Endothelial cell of umbilical vein (primary cell): ENCODE measurements at regions of chr2 and their contacts with region 1.

Region 1: DNA sequence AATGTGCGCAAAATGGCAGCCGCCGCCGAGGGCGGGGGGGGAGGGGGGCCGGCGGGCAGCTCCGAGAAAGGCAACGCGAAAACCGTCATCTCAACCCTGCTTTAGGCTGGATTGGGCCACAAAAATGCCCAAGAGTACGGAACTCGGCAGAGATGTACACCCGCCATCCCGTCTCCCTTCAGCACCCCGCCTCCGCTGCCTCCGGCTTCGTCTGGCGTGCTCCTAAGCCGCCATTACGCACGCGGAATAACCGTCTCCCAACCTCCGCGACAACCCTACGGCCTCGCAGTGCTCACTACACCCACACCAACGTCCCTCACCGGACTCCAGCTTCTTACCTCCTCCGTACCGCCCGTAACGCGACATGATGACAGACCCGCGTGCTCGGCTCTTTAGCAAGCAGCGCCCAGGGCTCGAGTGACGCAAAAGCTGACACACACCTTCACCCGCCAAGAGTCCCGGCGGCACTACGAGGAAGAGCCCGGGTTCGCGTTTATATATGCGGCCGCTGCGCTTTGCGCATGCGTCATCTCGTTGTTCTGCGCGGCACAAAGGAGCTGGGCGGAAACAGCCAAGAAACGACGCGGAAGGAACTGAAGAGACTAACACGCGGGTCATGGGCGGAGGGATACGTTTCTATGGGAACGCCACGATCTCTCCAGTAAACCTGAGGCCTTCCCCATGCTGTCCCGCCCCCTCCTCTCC is at the start of gene SRSF7:
- DNase-seq: peak; percentile 99
- H3K4me3 ChIP-seq: peak within 1 kb of the TSS; percentile 54 to 92 (median 72)
- H3K27ac ChIP-seq: peak within 1 kb of the TSS; percentile 85
- H3K4me1 ChIP-seq: peaks cover 36% of the 10 kb centered on the region
- H3K27me3 ChIP-seq: no peaks in the 10 kb centered on the region
- CTCF ChIP-seq: no peak
- POLR2A ChIP-seq: peak; percentile 100
- total RNA-seq, gene SRSF7: 202 and 204 TPM in 2 replicates

Region 2: DNA sequence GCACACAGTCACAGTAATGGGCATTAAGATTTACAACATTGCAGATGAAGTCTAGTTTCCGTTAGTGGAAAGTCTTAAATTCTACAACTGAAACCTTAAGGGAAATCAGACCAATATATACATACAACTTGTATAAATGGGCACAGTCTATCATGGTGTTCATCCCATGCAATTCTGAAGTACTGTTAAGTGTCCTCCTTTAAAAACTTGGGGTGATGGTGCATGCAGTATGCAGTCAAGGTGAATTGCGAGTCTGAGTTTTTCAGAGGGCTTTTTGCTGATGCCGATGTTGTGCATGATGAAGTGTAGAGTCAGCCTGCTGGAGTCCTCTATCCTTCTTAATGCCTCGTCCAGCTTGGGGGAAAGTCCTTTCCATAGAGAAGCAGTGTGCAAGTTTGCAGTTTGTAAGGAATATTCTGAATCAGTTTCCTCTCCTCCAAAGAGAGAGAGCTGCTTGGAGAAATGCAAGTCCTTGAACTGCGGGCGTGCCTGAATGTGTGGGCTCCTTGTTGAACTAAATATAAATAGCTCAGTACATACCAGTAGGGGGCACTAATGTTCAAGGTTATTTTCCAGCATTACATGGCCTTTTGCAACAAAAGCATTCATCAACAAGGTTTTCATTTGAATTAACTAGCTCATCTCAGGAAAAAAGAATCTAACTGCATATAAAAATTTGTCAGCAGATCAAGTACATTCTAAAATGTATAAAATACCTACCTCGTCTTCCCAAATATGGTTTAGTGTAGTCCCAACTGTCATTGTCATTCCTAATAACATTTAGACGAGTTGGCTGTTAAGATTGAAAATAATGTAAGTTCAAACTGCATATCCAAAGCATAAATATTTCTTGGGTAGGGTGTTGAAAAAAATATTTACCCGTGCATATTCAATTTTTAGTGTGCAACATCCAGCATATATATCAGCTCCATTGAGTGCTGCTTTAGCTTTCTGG is 169.6 kb before region 1 on chr2:
- CTCF ChIA-PET with region 1: interaction called, 4 read pairs
- POLR2A ChIA-PET with region 1: interaction called, 11 read pairs
- dilution Hi-C with region 1: no loop called
- intact Hi-C with region 1: no loop called
- DNase-seq: peak; percentile 74
- H3K4me3 ChIP-seq: no peak overlapping the region
- H3K27ac ChIP-seq: no peak overlapping the region
- H3K4me1 ChIP-seq: no peaks in the 10 kb centered on the region
- H3K27me3 ChIP-seq: no peaks in the 10 kb centered on the region
- CTCF ChIP-seq: peak; percentile 49 to 53
- POLR2A ChIP-seq: no peak

Region 3: GRCh38 chr2:38665854-38666555 is 85.0 kb before region 1 on chr2 and contains the start of gene GALM:
- CTCF ChIA-PET with region 1: no interaction called
- POLR2A ChIA-PET with region 1: interaction called, 12 read pairs
- dilution Hi-C with region 1: no loop called
- intact Hi-C with region 1: no loop called
- DNase-seq: peak; percentile 92
- H3K4me3 ChIP-seq: peak within 1 kb of the TSS; percentile 8 to 46 (median 44)
- H3K27ac ChIP-seq: no peak within 1 kb of the TSS
- H3K4me1 ChIP-seq: peaks cover 3% of the 10 kb centered on the region
- H3K27me3 ChIP-seq: no peaks in the 10 kb centered on the region
- CTCF ChIP-seq: no peak
- POLR2A ChIP-seq: no peak
- total RNA-seq, gene GALM: 5.4 and 6.1 TPM in 2 replicates

Region 4: GRCh38 chr2:38734299-38735058 is 16.6 kb before region 1 on chr2:
- CTCF ChIA-PET with region 1: no interaction called
- POLR2A ChIA-PET with region 1: interaction called, 20 read pairs
- dilution Hi-C with region 1: no loop called
- intact Hi-C with region 1: no loop called
- DNase-seq: no peak
- H3K4me3 ChIP-seq: no peak overlapping the region
- H3K27ac ChIP-seq: no peak overlapping the region
- H3K4me1 ChIP-seq: no peaks in the 10 kb centered on the region
- H3K27me3 ChIP-seq: no peaks in the 10 kb centered on the region
- CTCF ChIP-seq: no peak
- POLR2A ChIP-seq: no peak

Region 5: GRCh38 chr2:38771632-38772031 is 20.6 kb after region 1 on chr2:
- CTCF ChIA-PET with region 1: interaction called, 5 read pairs
- POLR2A ChIA-PET with region 1: interaction called, 29 read pairs
- dilution Hi-C with region 1: no loop called
- intact Hi-C with region 1: no loop called
- DNase-seq: peak; percentile 23
- H3K4me3 ChIP-seq: no peak overlapping the region
- H3K27ac ChIP-seq: no peak overlapping the region
- H3K4me1 ChIP-seq: no peaks in the 10 kb centered on the region
- H3K27me3 ChIP-seq: peaks cover 3 to 4% of the 10 kb centered on the region in 2 experiments
- CTCF ChIP-seq: no peak
- POLR2A ChIP-seq: no peak

Region 6: DNA sequence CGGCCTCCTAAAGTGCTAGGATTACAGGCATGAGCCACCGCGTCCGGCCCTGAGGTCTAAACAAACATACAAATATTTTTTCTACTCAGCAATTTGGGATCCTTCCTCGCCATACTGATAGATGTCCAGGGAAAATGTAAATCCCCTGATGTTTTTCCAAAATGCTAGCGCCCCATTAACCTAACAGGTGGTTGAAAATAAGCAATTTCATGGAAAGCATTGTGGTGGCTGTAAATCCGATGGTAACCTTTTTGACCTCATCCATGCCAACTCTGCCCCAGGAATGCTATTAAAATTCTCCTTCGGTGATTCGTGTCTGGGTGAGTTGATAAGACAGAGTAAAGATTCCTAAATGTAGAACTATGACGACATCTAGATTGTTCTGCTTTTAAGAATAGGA is 46.2 kb after region 1 on chr2:
- CTCF ChIA-PET with region 1: no interaction called
- POLR2A ChIA-PET with region 1: interaction called, 12 read pairs
- dilution Hi-C with region 1: no loop called
- intact Hi-C with region 1: loop called (anchors 1 kb)
- DNase-seq: peak; percentile 71
- H3K4me3 ChIP-seq: no peak overlapping the region
- H3K27ac ChIP-seq: peak overlapping the region; percentile 9
- H3K4me1 ChIP-seq: no peaks in the 10 kb centered on the region
- H3K27me3 ChIP-seq: no peaks in the 10 kb centered on the region
- CTCF ChIP-seq: no peak
- POLR2A ChIP-seq: no peak

Region 7: GRCh38 chr2:39124000-39124745 is 373.1 kb after region 1 on chr2:
- CTCF ChIA-PET with region 1: no interaction called
- POLR2A ChIA-PET with region 1: interaction called, 5 read pairs
- dilution Hi-C with region 1: no loop called
- intact Hi-C with region 1: loop called (anchors 2 kb)
- DNase-seq: peak; percentile 97
- H3K4me3 ChIP-seq: peak overlapping the region; percentile 53 to 96 (median 89)
- H3K27ac ChIP-seq: peak overlapping the region; percentile 45
- H3K4me1 ChIP-seq: peaks cover 18% of the 10 kb centered on the region
- H3K27me3 ChIP-seq: no peaks in the 10 kb centered on the region
- CTCF ChIP-seq: peak; percentile 28 to 86
- POLR2A ChIP-seq: peak; percentile 96

Region 8: GRCh38 chr2:39871291-39871761 is 1120.3 kb after region 1 on chr2:
- CTCF ChIA-PET with region 1: no interaction called
- POLR2A ChIA-PET with region 1: no interaction called
- dilution Hi-C with region 1: no loop called
- intact Hi-C with region 1: no loop called
- DNase-seq: peak; percentile 14
- H3K4me3 ChIP-seq: no peak overlapping the region
- H3K27ac ChIP-seq: no peak overlapping the region
- H3K4me1 ChIP-seq: no peaks in the 10 kb centered on the region
- H3K27me3 ChIP-seq: no peaks in the 10 kb centered on the region
- CTCF ChIP-seq: no peak
- POLR2A ChIP-seq: no peak